Endothelial cell of umbilical vein (primary cell): ENCODE measurements at regions of chr20 and their contacts with region 1.

Region 1: DNA sequence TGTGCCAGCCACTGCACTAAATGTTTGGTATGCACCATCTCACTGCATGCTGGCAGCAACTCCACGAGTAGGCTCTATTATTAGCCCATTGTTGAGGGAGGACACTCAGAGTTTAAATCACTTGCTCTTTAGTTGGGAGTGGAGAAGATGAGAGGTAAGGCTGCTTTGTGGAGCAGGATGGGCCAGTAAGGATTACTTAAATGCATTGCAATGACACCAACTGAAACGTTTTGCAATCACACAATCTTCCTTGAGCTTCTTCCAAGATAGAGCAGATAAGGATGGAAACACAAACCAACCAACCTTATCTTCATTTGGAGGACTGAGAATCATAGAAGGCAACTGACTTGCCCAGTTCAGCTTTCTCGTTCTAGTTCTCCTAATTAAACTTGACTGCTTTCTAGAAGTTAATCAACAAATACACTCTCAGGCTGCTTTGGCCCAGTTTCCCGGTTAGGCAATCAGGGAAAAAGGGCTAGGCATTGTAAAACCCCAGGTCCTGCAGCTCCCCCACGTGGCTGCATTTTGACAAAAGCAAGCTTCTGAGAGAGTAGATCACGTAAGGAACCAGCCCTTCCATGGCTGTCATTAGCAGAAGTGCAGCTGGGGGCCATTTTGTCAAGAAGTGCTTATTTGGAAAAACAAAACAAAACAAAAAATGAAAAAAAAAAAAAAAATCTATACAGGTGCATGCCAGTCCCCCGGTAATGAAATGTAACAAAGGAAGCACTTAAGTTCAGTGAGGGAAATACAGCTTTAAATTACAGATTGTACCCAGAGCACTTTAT is 130.6 kb downstream of the BCAS1 start:
- DNase-seq: peak; percentile 94
- H3K4me3 ChIP-seq: no peak overlapping the region
- H3K27ac ChIP-seq: peak overlapping the region; percentile 65
- H3K4me1 ChIP-seq: peaks cover 29% of the 10 kb centered on the region
- H3K27me3 ChIP-seq: no peaks in the 10 kb centered on the region
- CTCF ChIP-seq: peak; percentile 70 to 84
- POLR2A ChIP-seq: no peak

Region 2: GRCh38 chr20:53157443-53158408 is 782.0 kb before region 1 on chr20:
- CTCF ChIA-PET with region 1: interaction called, 3 read pairs
- POLR2A ChIA-PET with region 1: no interaction called
- dilution Hi-C with region 1: no loop called
- intact Hi-C with region 1: loop called (anchors 1 kb)
- DNase-seq: peak; percentile 27
- H3K4me3 ChIP-seq: no peak overlapping the region
- H3K27ac ChIP-seq: no peak overlapping the region
- H3K4me1 ChIP-seq: no peaks in the 10 kb centered on the region
- H3K27me3 ChIP-seq: no peaks in the 10 kb centered on the region
- CTCF ChIP-seq: peak; percentile 47 to 64
- POLR2A ChIP-seq: no peak

Region 3: GRCh38 chr20:53578492-53579222 is 361.1 kb before region 1 on chr20:
- CTCF ChIA-PET with region 1: interaction called, 141 read pairs
- POLR2A ChIA-PET with region 1: interaction called, 4 read pairs
- dilution Hi-C with region 1: loop called (anchors 25 kb)
- intact Hi-C with region 1: loop called (anchors 1 kb)
- DNase-seq: peak; percentile 90
- H3K4me3 ChIP-seq: peak overlapping the region in 1 of 3 experiments; percentile 23
- H3K27ac ChIP-seq: peak overlapping the region; percentile 43
- H3K4me1 ChIP-seq: peaks cover 20% of the 10 kb centered on the region
- H3K27me3 ChIP-seq: no peaks in the 10 kb centered on the region
- CTCF ChIP-seq: peak; percentile 60 to 75
- POLR2A ChIP-seq: peak; percentile 13

Region 4: DNA sequence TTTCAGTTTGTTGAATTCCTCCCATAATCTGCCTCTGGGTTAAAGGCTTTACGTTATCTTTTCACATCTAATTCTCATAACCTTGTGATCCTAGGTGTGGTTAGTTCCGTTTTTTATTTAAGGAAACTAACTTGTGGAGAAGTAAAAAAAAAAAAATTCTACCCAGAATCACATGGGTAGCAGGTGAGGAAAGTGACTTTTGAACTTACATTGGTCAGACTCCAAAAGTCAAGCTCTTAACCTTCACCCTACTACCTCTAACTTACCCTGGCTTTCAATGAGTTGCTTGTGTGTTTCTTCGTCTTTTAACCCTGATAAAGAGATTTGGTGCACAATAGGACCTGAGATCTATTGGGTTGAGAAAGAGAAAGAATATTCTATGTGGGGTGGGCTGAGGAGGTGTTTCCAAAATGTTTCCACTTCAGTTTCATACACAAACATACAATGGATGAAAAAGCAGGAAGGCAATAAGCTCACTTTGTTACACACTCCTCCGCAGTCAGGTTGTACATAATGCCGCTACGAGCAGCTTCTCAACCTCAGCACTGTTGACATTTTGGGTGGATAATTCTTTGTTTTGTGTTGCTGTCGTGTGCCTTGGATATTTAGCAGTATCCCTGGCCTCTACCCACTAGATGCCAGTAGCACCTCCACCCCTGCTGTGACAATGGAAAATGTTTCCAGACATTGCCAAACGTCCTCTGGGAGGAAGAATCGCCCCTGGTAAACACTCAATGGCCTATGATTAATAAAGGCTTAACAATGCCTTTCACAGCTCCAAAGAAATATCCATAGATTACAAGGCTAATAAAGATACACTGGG is 153.1 kb before region 1 on chr20:
- CTCF ChIA-PET with region 1: interaction called, 10 read pairs
- POLR2A ChIA-PET with region 1: no interaction called
- dilution Hi-C with region 1: no loop called
- intact Hi-C with region 1: no loop called
- DNase-seq: peak; percentile 70
- H3K4me3 ChIP-seq: no peak overlapping the region
- H3K27ac ChIP-seq: no peak overlapping the region
- H3K4me1 ChIP-seq: peaks cover 24% of the 10 kb centered on the region
- H3K27me3 ChIP-seq: no peaks in the 10 kb centered on the region
- CTCF ChIP-seq: peak in 1 of 2 donors; percentile 6
- POLR2A ChIP-seq: no peak

Region 5: GRCh38 chr20:53899351-53900167 is 40.2 kb before region 1 on chr20:
- CTCF ChIA-PET with region 1: interaction called, 35 read pairs
- POLR2A ChIA-PET with region 1: interaction called, 3 read pairs
- dilution Hi-C with region 1: no loop called
- intact Hi-C with region 1: loop called (anchors 1 kb)
- DNase-seq: peak; percentile 47
- H3K4me3 ChIP-seq: no peak overlapping the region
- H3K27ac ChIP-seq: peak overlapping the region; percentile 97
- H3K4me1 ChIP-seq: peaks cover 50% of the 10 kb centered on the region
- H3K27me3 ChIP-seq: no peaks in the 10 kb centered on the region
- CTCF ChIP-seq: no peak
- POLR2A ChIP-seq: no peak

Region 6: GRCh38 chr20:54017809-54018208 is 78.0 kb after region 1 on chr20:
- CTCF ChIA-PET with region 1: no interaction called
- POLR2A ChIA-PET with region 1: no interaction called
- dilution Hi-C with region 1: no loop called
- intact Hi-C with region 1: no loop called
- DNase-seq: no peak
- H3K4me3 ChIP-seq: no peak overlapping the region
- H3K27ac ChIP-seq: no peak overlapping the region
- H3K4me1 ChIP-seq: no peaks in the 10 kb centered on the region
- H3K27me3 ChIP-seq: no peaks in the 10 kb centered on the region
- CTCF ChIP-seq: no peak
- POLR2A ChIP-seq: no peak

Region 7: DNA sequence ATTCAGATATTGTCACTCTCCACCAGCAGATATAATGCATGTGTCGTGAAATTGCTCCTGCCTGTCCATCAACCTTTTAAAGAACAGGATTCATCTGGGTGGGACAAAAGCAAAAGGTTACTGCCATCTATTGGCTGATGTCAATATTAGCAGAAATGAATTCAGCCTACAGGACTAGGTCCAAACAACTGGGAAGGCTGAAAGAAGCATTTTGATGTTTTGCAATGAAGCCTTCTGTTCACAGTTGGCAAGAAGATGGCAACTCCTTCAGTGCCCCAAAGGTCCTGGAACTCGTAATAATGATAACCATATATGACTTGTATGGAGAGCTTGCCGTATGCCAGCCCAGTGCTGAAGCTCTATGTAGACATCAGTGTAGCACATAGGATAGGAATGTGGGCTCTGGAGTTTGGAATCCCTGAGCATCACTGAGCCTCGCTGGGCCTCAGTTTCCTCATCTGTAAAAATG is 123.1 kb after region 1 on chr20:
- CTCF ChIA-PET with region 1: interaction called, 7 read pairs
- POLR2A ChIA-PET with region 1: no interaction called
- dilution Hi-C with region 1: no loop called
- intact Hi-C with region 1: loop called (anchors 1 kb)
- DNase-seq: peak; percentile 35
- H3K4me3 ChIP-seq: no peak overlapping the region
- H3K27ac ChIP-seq: no peak overlapping the region
- H3K4me1 ChIP-seq: no peaks in the 10 kb centered on the region
- H3K27me3 ChIP-seq: no peaks in the 10 kb centered on the region
- CTCF ChIP-seq: peak; percentile 40 to 44
- POLR2A ChIP-seq: no peak